ENCODE measurements at regions of chr19 and their contacts with region 1.

Region 1: GRCh38 chr19:18000935-18001778 is 6.8 kb upstream of the ARRDC2 start:
- DNase-seq: peak in 1 of 2 experiments; percentile 77
- H3K4me3 ChIP-seq: peak overlapping the region; percentile 33 to 70 (median 40)
- H3K27ac ChIP-seq: no peak overlapping the region
- H3K4me1 ChIP-seq: peaks cover 0 to 3% (median 0%) of the 10 kb centered on the region in 4 experiments; a peak in 2 of 7 replicates
- H3K27me3 ChIP-seq: peaks cover 3 to 25% (median 20%) of the 10 kb centered on the region in 4 experiments
- CTCF ChIP-seq: no peak
- EP300 ChIP-seq: no peak
- POLR2A ChIP-seq: peak in 1 of 2 experiments; percentile 55; a peak in 2 of 3 replicates
- RAD21 ChIP-seq: no peak

Region 2: DNA sequence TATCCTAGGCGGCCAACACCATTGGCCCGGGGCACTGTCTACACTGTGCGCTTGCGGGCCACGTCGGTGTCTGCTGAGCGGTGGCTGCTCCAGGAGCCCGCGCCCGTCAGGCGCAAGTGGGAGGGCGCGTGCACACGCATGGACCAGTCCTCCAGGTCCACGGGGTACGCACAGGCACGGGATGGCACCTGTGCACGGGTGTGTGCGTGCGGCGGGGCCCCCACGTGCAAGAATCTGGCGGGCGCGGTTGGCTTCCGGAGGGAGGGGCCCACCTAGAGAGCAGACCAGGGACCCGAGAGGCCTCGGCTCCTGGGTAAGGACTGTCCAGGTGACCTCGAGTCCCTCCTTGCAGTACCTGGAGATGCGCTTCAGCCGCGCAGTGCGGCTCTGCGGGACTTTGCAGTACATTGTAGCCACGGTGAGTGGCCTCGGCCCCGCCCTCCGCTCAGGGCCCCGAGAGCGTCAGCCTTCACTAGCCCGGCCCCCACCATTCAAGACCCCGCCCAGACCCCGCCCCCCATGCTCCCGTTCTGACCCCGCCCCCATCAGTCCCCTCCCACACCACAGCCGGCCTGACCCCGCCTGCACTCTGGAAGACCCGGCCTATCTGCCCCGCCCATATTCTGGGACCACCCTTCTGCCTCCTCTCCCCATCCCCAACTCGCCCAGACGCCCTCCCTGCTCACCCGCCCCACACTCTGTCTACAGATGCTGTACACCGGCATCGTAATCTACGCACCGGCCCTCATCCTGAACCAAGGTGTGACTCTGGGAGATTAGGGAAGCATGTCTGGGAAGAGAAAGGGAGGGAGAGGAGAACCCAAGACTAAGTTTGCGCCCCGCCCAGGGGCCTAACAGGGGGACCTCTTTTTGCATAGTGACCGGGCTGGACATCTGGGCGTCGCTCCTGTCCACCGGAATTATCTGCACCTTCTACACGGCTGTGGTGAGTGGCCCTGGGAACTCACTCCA is 127.1 kb before region 1 on chr19:
- CTCF ChIA-PET with region 1: interaction called, 27 read pairs
- POLR2A ChIA-PET with region 1: no interaction called
- DNase-seq: peak in 1 of 2 experiments; percentile 91
- H3K4me3 ChIP-seq: peak overlapping the region; percentile 64 to 78 (median 72)
- H3K27ac ChIP-seq: no peak overlapping the region
- H3K4me1 ChIP-seq: peaks cover 0 to 6% (median under 1%) of the 10 kb centered on the region in 4 experiments; a peak in 3 of 7 replicates
- H3K27me3 ChIP-seq: peaks cover 0 to 9% (median 5%) of the 10 kb centered on the region in 4 experiments; a peak in 5 of 7 replicates
- CTCF ChIP-seq: 0 out of 4 replicates have a peak, but pooled peaks of 1 of the 3 experiments have one; percentile 1
- EP300 ChIP-seq: no peak
- POLR2A ChIP-seq: no peak
- RAD21 ChIP-seq: no peak

Region 3: GRCh38 chr19:17938092-17938845 is 62.9 kb before region 1 on chr19:
- CTCF ChIA-PET with region 1: interaction called, 271 read pairs
- POLR2A ChIA-PET with region 1: interaction called, 13 read pairs
- DNase-seq: peak in 1 of 2 experiments; percentile 93
- H3K4me3 ChIP-seq: no peak overlapping the region
- H3K27ac ChIP-seq: no peak overlapping the region
- H3K4me1 ChIP-seq: peaks cover 0 to 15% (median 11%) of the 10 kb centered on the region in 4 experiments; a peak in 6 of 7 replicates
- H3K27me3 ChIP-seq: no peaks in the 10 kb centered on the region
- CTCF ChIP-seq: peak; percentile 96 to 98 (median 96)
- EP300 ChIP-seq: no peak
- POLR2A ChIP-seq: no peak
- RAD21 ChIP-seq: peak; percentile 97

Region 4: GRCh38 chr19:17966550-17967256 is 34.5 kb before region 1 on chr19 and contains the start of gene KCNN1:
- CTCF ChIA-PET with region 1: interaction called, 21 read pairs
- POLR2A ChIA-PET with region 1: interaction called, 5 read pairs
- DNase-seq: peak in 1 of 2 experiments; percentile 83
- H3K4me3 ChIP-seq: peak within 1 kb of the TSS; percentile 55 to 87 (median 72)
- H3K27ac ChIP-seq: no peak within 1 kb of the TSS
- H3K4me1 ChIP-seq: peaks cover 4 to 18% (median 11%) of the 10 kb centered on the region in 4 experiments
- H3K27me3 ChIP-seq: peaks cover 0 to 9% (median 3%) of the 10 kb centered on the region in 4 experiments; a peak in 3 of 7 replicates
- CTCF ChIP-seq: no peak
- EP300 ChIP-seq: no peak
- POLR2A ChIP-seq: no peak
- RAD21 ChIP-seq: no peak
- total RNA-seq, gene KCNN1: 9.3 and 11.0 TPM in 2 replicates

Region 5: DNA sequence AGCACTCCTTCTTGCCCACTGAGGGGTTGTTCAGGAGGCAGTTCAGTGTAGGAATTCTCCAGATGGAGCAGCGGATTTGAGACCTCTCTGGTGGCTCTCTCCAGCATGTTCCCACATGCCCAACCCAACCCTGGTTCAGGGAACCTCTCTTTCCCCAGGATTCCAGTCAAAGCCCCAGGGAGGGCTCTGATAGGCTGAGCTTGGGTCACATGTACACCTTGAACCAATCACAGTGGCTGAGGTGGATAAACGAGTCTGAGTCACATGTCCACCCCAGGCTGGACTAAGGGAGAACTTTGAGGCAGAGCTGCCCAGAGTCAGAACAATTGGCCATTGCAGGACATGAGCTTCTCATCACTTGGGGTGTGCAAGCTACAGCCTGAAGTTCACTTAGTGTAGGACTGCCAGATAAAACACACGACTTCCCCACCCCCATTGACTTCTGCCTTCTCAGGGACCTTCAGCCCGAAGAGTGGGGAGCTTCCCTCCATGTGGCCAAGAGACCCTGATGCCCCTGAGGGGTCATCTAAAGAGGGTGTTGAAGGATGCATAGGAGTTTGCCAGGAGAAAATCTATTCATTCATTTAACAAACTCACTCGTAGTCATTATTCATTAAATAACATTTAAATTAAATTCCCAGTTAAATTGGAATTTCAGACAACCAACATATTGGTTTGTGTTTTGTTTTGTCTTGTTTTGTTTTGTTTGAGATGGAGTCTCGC is 92.4 kb after region 1 on chr19:
- CTCF ChIA-PET with region 1: no interaction called
- POLR2A ChIA-PET with region 1: no interaction called
- DNase-seq: no peak
- H3K4me3 ChIP-seq: no peak overlapping the region
- H3K27ac ChIP-seq: no peak overlapping the region
- H3K4me1 ChIP-seq: peaks cover 3 to 7% (median 4%) of the 10 kb centered on the region in 4 experiments; a peak in 5 of 7 replicates
- H3K27me3 ChIP-seq: peaks cover 0 to 6% (median 4%) of the 10 kb centered on the region in 4 experiments; a peak in 4 of 7 replicates
- CTCF ChIP-seq: no peak
- EP300 ChIP-seq: no peak
- POLR2A ChIP-seq: no peak
- RAD21 ChIP-seq: no peak